Activated T-helper 2 cell treated with anti-CD3 and anti-CD28 coated beads, Interferon-gamma antibody, Interleukin-2, Interleukin-4, amounts not matched to agents 10 μg/mL and 5 μg/mL and 100 μg/mL, durations not matched to agents 14 hours and 24 hours and 36 hours (primary cell): ENCODE measurements at regions of chrX and their contacts with region 1.

Region 1: GRCh38 chrX:70030301-70030767 is 19.4 kb downstream of the AWAT2 start:
- DNase-seq: peak; percentile 13
- H3K4me3 Mint-ChIP-seq: no peak overlapping the region
- H3K27ac Mint-ChIP-seq: no peak overlapping the region
- H3K4me1 Mint-ChIP-seq: peaks cover 6% of the 10 kb centered on the region
- H3K27me3 Mint-ChIP-seq: no peaks in the 10 kb centered on the region

Region 2: DNA sequence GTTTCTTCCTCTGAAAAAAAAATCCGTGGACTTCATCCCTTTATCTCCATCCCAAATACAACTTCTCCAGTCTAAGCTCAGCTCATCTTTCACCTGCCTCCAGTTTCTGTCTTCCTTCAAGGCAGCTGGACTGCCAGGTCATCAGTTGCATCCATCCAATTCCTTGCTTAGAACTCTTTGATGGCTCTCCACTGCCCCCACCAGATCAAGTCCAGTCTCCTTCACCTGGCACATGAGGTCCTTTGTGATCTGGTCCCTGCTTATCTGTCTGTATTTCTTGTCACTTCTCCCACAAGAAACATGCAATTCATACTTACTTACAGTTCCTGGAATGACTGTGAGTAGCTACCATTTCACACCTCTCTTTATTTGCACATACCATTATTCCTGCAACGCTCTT is 65.7 kb after region 1 on chrX:
- intact Hi-C with region 1: loop called (anchors 5 kb)
- DNase-seq: no peak
- H3K4me3 Mint-ChIP-seq: no peak overlapping the region
- H3K27ac Mint-ChIP-seq: no peak overlapping the region
- H3K4me1 Mint-ChIP-seq: no peaks in the 10 kb centered on the region
- H3K27me3 Mint-ChIP-seq: peaks cover 3% of the 10 kb centered on the region

Region 3: DNA sequence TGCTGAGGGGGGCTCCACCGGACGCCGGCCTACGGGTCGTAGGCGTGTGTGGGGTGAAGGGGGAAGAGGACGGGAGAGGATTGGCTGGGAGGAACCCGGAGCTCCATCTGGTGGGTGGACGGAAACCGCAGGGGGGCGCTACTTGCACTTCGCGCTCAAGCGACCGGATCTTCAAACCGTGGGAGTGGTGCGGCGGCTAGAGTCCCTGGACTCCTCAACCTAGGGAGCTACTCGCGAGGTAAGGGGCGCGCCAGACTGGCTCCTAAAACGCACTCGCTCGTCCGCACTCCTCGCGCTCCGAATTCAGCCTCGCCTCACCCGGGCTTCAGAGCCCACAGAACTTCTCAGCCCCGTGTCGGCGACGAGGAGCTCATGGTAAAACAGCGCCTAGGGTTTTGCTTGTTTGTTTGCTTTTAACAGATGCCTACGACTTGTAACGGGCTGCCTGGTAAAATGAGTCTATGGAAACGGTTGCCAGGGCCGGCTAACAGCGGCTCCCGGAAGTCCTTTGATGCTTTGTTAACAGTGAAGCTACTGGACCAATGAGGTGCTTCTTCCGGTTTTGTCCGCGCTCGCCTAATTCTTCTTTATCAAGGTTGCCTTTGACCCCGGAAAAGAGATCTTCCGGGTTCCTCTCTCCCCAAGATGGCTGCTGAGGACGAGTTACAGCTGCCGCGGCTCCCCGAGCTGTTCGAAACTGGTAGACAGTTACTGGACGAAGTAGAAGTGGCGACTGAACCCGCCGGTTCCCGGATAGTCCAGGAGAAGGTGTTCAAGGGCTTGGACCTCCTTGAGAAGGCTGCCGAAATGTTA is 103.2 kb after region 1 on chrX and contains the start of gene IGBP1:
- intact Hi-C with region 1: loop called (anchors 1 kb)
- DNase-seq: peak; percentile 76
- H3K4me3 Mint-ChIP-seq: peak within 1 kb of the TSS; percentile 98
- H3K27ac Mint-ChIP-seq: peak within 1 kb of the TSS; percentile 91
- H3K4me1 Mint-ChIP-seq: peaks cover 20% of the 10 kb centered on the region
- H3K27me3 Mint-ChIP-seq: no peaks in the 10 kb centered on the region
- total RNA-seq, gene IGBP1: 33.0 and 33.6 TPM in 2 replicates

Region 4: GRCh38 chrX:70219938-70220767 is 189.8 kb after region 1 on chrX:
- intact Hi-C with region 1: no loop called
- DNase-seq: no peak
- H3K4me3 Mint-ChIP-seq: no peak overlapping the region
- H3K27ac Mint-ChIP-seq: no peak overlapping the region
- H3K4me1 Mint-ChIP-seq: no peaks in the 10 kb centered on the region
- H3K27me3 Mint-ChIP-seq: no peaks in the 10 kb centered on the region